Aorta (tissue), 5 donors: ENCODE measurements at regions of chr11 and their contacts with region 1.

Region 1: GRCh38 chr11:133082851-133083488 is 449.3 kb downstream of the OPCML start:
- DNase-seq: peak; percentile 60 to 85
- ATAC-seq: peak; percentile 90
- H3K4me3 ChIP-seq: no peak overlapping the region
- H3K27ac ChIP-seq: no peak overlapping the region
- H3K4me1 ChIP-seq: no peaks in the 10 kb centered on the region
- H3K27me3 ChIP-seq: no peaks in the 10 kb centered on the region

Region 2: GRCh38 chr11:133156986-133157745 is 74.2 kb after region 1 on chr11:
- intact Hi-C with region 1: loop called in 1 of 2 experiments (anchors 2 kb)
- DNase-seq: no peak
- ATAC-seq: no peak
- H3K4me3 ChIP-seq: no peak overlapping the region
- H3K27ac ChIP-seq: no peak overlapping the region
- H3K4me1 ChIP-seq: no peaks in the 10 kb centered on the region
- H3K27me3 ChIP-seq: no peaks in the 10 kb centered on the region

Region 3: GRCh38 chr11:133834682-133835592 is 752.0 kb after region 1 on chr11:
- intact Hi-C with region 1: loop called (anchors 5 to 10 kb)
- DNase-seq: no peak
- ATAC-seq: peak; percentile 61
- H3K4me3 ChIP-seq: no peak overlapping the region
- H3K27ac ChIP-seq: no peak overlapping the region
- H3K4me1 ChIP-seq: no peaks in the 10 kb centered on the region
- H3K27me3 ChIP-seq: no peaks in the 10 kb centered on the region